HCT116 (cell line): ENCODE measurements at regions of chr9 and their contacts with region 1.

Region 1: GRCh38 chr9:19925817-19926503 is 137.1 kb upstream of the SLC24A2 start:
- DNase-seq: peak; percentile 56
- ATAC-seq: peak; percentile 95
- H3K4me3 ChIP-seq: peak overlapping the region; percentile 36 to 40
- H3K27ac ChIP-seq: no peak overlapping the region
- H3K4me1 ChIP-seq: peaks cover 0 to 4% of the 10 kb centered on the region in 2 experiments; a peak in 1 of 4 replicates
- H3K27me3 ChIP-seq: peaks cover 17% of the 10 kb centered on the region
- CTCF ChIP-seq: peak; percentile 68 to 95 (median 95)
- POLR2A ChIP-seq: no peak
- RAD21 ChIP-seq: peak; percentile 93

Region 2: GRCh38 chr9:19471737-19472648 is 454.0 kb before region 1 on chr9:
- CTCF ChIA-PET with region 1: interaction called, 8 read pairs
- POLR2A ChIA-PET with region 1: no interaction called
- RAD21 ChIA-PET with region 1: no interaction called
- intact Hi-C with region 1: loop called (anchors 2 kb)
- DNase-seq: peak; percentile 48
- ATAC-seq: peak; percentile 97
- H3K4me3 ChIP-seq: peak overlapping the region; percentile 20 to 31
- H3K27ac ChIP-seq: no peak overlapping the region
- H3K4me1 ChIP-seq: peaks cover 4 to 8% of the 10 kb centered on the region in 2 experiments; a peak in 3 of 4 replicates
- H3K27me3 ChIP-seq: no peaks in the 10 kb centered on the region
- CTCF ChIP-seq: peak; percentile 55 to 92 (median 83); a peak in 5 of 6 replicates
- POLR2A ChIP-seq: no peak
- RAD21 ChIP-seq: peak; percentile 84

Region 3: GRCh38 chr9:19946441-19947109 is 20.6 kb after region 1 on chr9:
- CTCF ChIA-PET with region 1: no interaction called
- POLR2A ChIA-PET with region 1: no interaction called
- RAD21 ChIA-PET with region 1: no interaction called
- intact Hi-C with region 1: no loop called
- DNase-seq: no peak
- ATAC-seq: peak; percentile 50; the same call in 1 of the 2 replicates
- H3K4me3 ChIP-seq: no peak overlapping the region
- H3K27ac ChIP-seq: no peak overlapping the region
- H3K4me1 ChIP-seq: no peaks in the 10 kb centered on the region
- H3K27me3 ChIP-seq: peaks cover 36% of the 10 kb centered on the region
- CTCF ChIP-seq: peak in 1 of 3 experiments; percentile 32; a peak in 2 of 6 replicates
- POLR2A ChIP-seq: no peak
- RAD21 ChIP-seq: peak; percentile 46; the same call in 1 of the 2 replicates

Region 4: GRCh38 chr9:20356403-20357035 is 430.6 kb after region 1 on chr9:
- CTCF ChIA-PET with region 1: no interaction called
- POLR2A ChIA-PET with region 1: no interaction called
- RAD21 ChIA-PET with region 1: no interaction called
- intact Hi-C with region 1: loop called (anchors 1 kb)
- DNase-seq: peak; percentile 43
- ATAC-seq: peak; percentile 91
- H3K4me3 ChIP-seq: no peak overlapping the region
- H3K27ac ChIP-seq: no peak overlapping the region
- H3K4me1 ChIP-seq: no peaks in the 10 kb centered on the region
- H3K27me3 ChIP-seq: peaks cover 5% of the 10 kb centered on the region; the same call in 1 of the 2 replicates
- CTCF ChIP-seq: peak; percentile 49 to 66 (median 62); a peak in 5 of 6 replicates
- POLR2A ChIP-seq: no peak
- RAD21 ChIP-seq: peak; percentile 85

Region 5: DNA sequence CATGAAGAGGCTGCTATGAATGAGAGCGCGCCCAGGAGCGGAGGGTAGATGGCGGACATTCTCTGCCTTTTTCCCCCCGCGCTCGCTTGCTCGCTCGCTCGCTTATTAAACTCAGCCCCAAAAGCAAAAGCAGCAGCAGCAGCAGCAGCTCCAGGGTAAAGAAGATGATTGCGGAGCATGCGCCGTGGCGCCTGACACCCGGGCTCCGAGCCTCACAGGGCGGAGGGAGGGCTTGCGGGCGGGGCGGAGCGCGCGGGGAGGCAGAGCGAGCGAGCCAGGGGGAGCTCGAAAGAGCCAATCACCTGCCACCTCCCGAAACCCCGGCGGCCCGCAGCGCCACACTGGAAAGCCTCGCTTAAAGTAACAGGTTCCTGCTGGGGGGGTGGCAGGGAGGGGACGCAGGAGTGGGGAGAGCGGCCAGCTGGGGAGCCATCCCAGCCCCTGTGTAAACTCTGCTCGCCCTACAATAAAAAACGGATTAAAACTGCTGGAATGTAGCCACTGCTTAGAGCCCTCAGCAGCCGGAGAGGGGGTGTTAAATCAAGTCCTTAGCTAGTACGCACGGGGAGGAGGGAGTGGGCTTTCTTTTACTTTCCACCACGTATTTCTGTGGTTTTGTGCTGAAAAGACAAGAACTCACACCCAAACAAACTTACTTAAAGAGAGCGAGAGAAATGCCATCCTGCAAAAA is 696.5 kb after region 1 on chr9 and contains the start of gene MLLT3:
- CTCF ChIA-PET with region 1: no interaction called
- POLR2A ChIA-PET with region 1: no interaction called
- RAD21 ChIA-PET with region 1: no interaction called
- intact Hi-C with region 1: loop called (anchors 2 kb)
- DNase-seq: peak; percentile 84
- ATAC-seq: peak; percentile 88
- H3K4me3 ChIP-seq: peak within 1 kb of the TSS; percentile 52 to 75
- H3K27ac ChIP-seq: peak within 1 kb of the TSS; percentile 66
- H3K4me1 ChIP-seq: peaks cover 0 to 23% of the 10 kb centered on the region in 2 experiments; a peak in 2 of 4 replicates
- H3K27me3 ChIP-seq: peaks cover 10% of the 10 kb centered on the region; the same call in 1 of the 2 replicates
- CTCF ChIP-seq: no peak
- POLR2A ChIP-seq: peak; percentile 24
- RAD21 ChIP-seq: no peak
- total RNA-seq, gene MLLT3: 4.3 TPM

Region 6: GRCh38 chr9:21110708-21111576 is 1185.0 kb after region 1 on chr9:
- CTCF ChIA-PET with region 1: interaction called, 4 read pairs
- POLR2A ChIA-PET with region 1: interaction called, 3 read pairs
- RAD21 ChIA-PET with region 1: interaction called in 1 of 2 experiments, 5 read pairs
- intact Hi-C with region 1: loop called (anchors 1 kb)
- DNase-seq: peak; percentile 70
- ATAC-seq: peak; percentile 100
- H3K4me3 ChIP-seq: no peak overlapping the region
- H3K27ac ChIP-seq: no peak overlapping the region
- H3K4me1 ChIP-seq: no peaks in the 10 kb centered on the region
- H3K27me3 ChIP-seq: peaks cover 4% of the 10 kb centered on the region; the same call in 1 of the 2 replicates
- CTCF ChIP-seq: peak; percentile 62 to 93 (median 75); a peak in 5 of 6 replicates
- POLR2A ChIP-seq: no peak
- RAD21 ChIP-seq: peak; percentile 88